CD4-positive, alpha-beta T cell (primary cell): ENCODE measurements at regions of chr5 and their contacts with region 1.

Region 1: DNA sequence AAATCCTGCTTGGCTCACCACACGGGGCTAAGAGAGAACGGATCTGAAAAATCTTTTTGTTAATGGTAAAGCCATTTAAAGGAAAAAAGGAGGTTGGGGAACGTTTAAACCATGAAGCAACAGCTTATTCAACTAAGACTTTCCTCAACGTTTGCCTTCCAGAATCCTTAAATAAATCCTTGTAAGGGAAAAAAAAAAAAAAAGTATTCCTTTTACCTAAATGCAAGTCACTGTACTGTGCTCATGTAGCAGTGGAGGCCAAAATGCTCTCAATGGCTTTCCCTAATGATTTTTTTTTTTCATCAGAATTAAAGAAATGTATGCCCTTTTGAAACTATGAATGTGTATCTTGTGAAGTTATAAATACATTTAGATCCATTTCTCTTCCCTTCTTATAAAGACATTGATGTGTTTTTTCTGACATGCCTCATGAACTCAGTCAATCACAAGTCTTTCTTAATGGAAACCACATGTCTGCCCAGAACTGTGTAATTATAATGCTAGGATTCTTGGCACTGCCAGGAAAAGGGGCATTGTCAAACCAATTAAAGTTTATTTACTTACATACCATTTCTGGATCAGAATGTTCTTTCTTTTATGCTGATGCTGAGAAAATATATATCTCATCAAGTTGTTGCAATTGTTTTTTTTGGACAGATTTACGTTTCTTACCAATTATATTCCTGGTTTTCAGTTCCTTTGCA is 107.5 kb downstream of the EBF1 start:
- DNase-seq: no peak
- ATAC-seq: no peak
- H3K4me3 ChIP-seq: no peak overlapping the region
- H3K4me3 Mint-ChIP-seq: no peak overlapping the region
- H3K27ac ChIP-seq: no peak overlapping the region
- H3K27ac Mint-ChIP-seq: no peak overlapping the region
- H3K4me1 ChIP-seq: no peaks in the 10 kb centered on the region
- H3K4me1 Mint-ChIP-seq: no peaks in the 10 kb centered on the region
- H3K27me3 ChIP-seq: peaks cover 0 to 5% of the 10 kb centered on the region in 2 experiments
- H3K27me3 Mint-ChIP-seq: peaks cover 4% of the 10 kb centered on the region
- CTCF ChIP-seq: no peak

Region 2: DNA sequence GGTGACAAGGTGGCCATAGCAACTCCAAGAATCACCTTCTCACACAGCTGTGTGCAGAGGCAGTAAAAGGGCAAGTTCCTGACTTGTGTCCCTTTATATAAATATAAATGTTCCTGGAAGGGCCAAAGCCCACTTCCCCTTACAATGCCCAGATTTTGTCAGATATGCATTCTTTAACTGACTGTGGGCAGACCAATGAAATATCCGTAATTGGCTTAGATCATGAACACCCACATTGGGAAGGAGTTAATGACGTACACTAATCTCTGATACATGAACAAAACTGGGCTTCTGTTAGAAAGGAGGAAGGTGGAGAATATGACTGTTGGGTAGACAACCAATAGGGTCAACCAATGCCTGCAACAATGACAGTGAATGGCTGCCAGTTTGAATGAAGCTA is 736.1 kb before region 1 on chr5:
- CTCF ChIA-PET with region 1: no interaction called
- POLR2A ChIA-PET with region 1: no interaction called
- intact Hi-C with region 1: no loop called
- DNase-seq: no peak
- ATAC-seq: no peak
- H3K4me3 ChIP-seq: no peak overlapping the region
- H3K4me3 Mint-ChIP-seq: no peak overlapping the region
- H3K27ac ChIP-seq: no peak overlapping the region
- H3K27ac Mint-ChIP-seq: no peak overlapping the region
- H3K4me1 ChIP-seq: no peaks in the 10 kb centered on the region
- H3K4me1 Mint-ChIP-seq: no peaks in the 10 kb centered on the region
- H3K27me3 ChIP-seq: no peaks in the 10 kb centered on the region
- H3K27me3 Mint-ChIP-seq: peaks cover 4% of the 10 kb centered on the region
- CTCF ChIP-seq: no peak

Region 3: GRCh38 chr5:158725297-158725851 is 266.8 kb before region 1 on chr5:
- CTCF ChIA-PET with region 1: no interaction called
- POLR2A ChIA-PET with region 1: no interaction called
- intact Hi-C with region 1: no loop called
- DNase-seq: no peak
- ATAC-seq: no peak
- H3K4me3 ChIP-seq: no peak overlapping the region
- H3K4me3 Mint-ChIP-seq: no peak overlapping the region
- H3K27ac ChIP-seq: no peak overlapping the region
- H3K27ac Mint-ChIP-seq: no peak overlapping the region
- H3K4me1 ChIP-seq: no peaks in the 10 kb centered on the region
- H3K4me1 Mint-ChIP-seq: no peaks in the 10 kb centered on the region
- H3K27me3 ChIP-seq: no peaks in the 10 kb centered on the region
- H3K27me3 Mint-ChIP-seq: peaks cover 19% of the 10 kb centered on the region
- CTCF ChIP-seq: no peak

Region 4: DNA sequence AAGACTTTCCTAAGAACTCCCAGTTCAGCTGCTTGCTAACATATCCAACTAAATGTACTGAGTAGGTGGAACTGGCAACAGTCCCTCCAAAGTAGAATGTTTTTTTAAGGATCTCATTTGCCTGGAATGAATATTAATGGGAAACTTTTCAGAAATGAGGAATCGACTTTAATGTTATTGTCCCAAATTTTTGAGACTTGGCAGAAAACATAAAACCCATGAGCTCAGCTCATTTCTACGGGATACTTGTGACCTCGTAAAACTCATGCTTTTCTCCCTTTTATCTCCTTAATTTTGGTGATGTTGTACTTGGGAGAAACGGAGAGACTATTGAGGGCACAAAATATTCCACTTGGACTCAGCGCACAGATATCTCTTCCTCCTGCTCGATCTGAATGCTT is 189.2 kb before region 1 on chr5:
- CTCF ChIA-PET with region 1: no interaction called
- POLR2A ChIA-PET with region 1: no interaction called
- intact Hi-C with region 1: no loop called
- DNase-seq: no peak
- ATAC-seq: no peak
- H3K4me3 ChIP-seq: no peak overlapping the region
- H3K4me3 Mint-ChIP-seq: no peak overlapping the region
- H3K27ac ChIP-seq: no peak overlapping the region
- H3K27ac Mint-ChIP-seq: no peak overlapping the region
- H3K4me1 ChIP-seq: no peaks in the 10 kb centered on the region
- H3K4me1 Mint-ChIP-seq: no peaks in the 10 kb centered on the region
- H3K27me3 ChIP-seq: no peaks in the 10 kb centered on the region
- H3K27me3 Mint-ChIP-seq: peaks cover 11% of the 10 kb centered on the region
- CTCF ChIP-seq: no peak

Region 5: DNA sequence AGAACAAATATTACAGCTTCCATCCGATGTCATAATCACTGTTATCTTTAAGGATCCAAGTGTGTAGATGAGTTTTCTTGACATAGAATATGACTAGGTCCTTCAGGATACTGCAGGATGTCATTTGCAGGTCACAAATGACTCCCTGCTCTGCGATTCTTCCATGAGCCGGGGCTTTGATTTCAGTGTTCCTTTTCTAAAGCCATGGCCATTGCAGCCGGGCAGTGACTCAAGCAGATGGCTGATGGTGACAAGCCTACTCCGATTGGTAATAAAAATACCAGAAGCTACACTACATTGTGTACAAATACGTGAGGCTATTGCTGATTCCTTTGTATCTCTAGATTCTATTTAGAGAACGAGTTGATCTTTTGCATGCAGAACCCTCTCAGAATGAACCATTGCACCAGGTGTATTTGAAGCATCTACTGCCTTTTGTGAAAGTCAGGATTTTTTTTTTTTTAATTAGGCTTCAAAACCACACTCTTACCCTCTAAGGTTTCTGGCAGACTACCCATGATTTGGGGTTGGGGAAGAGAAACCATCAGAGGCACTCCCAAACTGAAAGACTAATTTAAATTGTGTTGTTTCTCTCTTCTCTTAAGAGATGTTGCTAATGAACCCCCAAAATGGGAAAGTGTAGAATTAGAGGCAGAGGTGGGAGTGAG is 653.1 kb after region 1 on chr5:
- CTCF ChIA-PET with region 1: no interaction called
- POLR2A ChIA-PET with region 1: no interaction called
- intact Hi-C with region 1: loop called in 1 of 2 experiments (anchors 5 kb)
- DNase-seq: no peak
- ATAC-seq: no peak
- H3K4me3 ChIP-seq: no peak overlapping the region
- H3K4me3 Mint-ChIP-seq: no peak overlapping the region
- H3K27ac ChIP-seq: no peak overlapping the region
- H3K27ac Mint-ChIP-seq: no peak overlapping the region
- H3K4me1 ChIP-seq: no peaks in the 10 kb centered on the region
- H3K4me1 Mint-ChIP-seq: no peaks in the 10 kb centered on the region
- H3K27me3 ChIP-seq: no peaks in the 10 kb centered on the region
- H3K27me3 Mint-ChIP-seq: peaks cover 21% of the 10 kb centered on the region
- CTCF ChIP-seq: no peak